ENCODE measurements at regions of chr11 and their contacts with region 1.

Region 1: GRCh38 chr11:60781286-60781980 is 3.7 kb upstream of the MS4A10 start:
- DNase-seq: no peak
- ATAC-seq: no peak
- H3K4me3 ChIP-seq: no peak overlapping the region
- H3K27ac ChIP-seq: no peak overlapping the region
- H3K4me1 ChIP-seq: peaks cover 0 to 13% (median 3%) of the 10 kb centered on the region in 12 donors
- H3K27me3 ChIP-seq: no peaks in the 10 kb centered on the region
- CTCF ChIP-seq: no peak
- POLR2A ChIP-seq: no peak

Region 2: GRCh38 chr11:60734279-60734678 is 47.2 kb before region 1 on chr11:
- intact Hi-C with region 1: no loop called
- DNase-seq: no peak
- ATAC-seq: no peak
- H3K4me3 ChIP-seq: no peak overlapping the region
- H3K27ac ChIP-seq: no peak overlapping the region
- H3K4me1 ChIP-seq: no peaks in the 10 kb centered on the region
- H3K27me3 ChIP-seq: peaks cover 0 to 13% (median 0%) of the 10 kb centered on the region in 9 donors
- CTCF ChIP-seq: no peak
- POLR2A ChIP-seq: no peak

Region 3: DNA sequence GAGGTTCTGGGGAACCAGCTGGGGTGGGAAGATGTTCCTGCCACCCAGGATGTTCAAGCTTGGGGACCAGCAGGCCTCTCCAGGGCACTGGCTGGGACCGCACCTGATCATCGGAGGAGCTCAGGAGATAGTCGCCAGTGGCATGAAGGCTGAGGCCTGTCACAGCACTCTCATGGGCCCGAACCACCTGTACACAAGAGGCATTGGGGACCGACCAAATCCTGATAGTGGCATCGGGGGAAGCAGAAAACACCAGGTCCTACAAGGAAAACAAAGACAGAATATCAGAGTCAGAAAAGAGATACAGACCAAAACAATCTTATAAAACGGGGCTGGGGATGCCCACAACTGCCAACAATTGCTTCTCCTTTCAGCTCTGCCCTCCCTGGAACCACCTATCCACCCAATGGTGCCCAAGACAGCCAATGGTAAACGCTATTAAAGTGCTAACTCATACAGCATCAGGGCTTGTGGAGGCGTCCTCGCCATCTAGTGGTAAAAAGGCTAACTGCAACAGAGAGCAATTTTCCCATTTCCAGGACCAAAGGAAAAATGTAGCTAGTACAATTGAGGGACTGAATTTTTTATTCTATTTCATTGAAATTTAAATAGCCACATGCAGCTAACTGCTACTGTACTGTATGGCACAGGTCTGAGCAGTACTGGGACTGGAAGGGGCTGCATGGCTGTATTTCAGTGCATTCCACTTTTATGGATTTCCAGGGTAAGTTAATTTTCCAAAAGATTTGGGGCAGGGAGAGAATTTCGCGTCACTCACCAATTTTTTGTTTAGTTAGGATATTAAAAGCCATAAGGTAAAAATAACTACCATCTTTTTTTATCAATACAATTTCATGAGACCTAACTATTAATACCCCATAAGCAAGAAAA is 117.9 kb after region 1 on chr11:
- intact Hi-C with region 1: loop called in 7 of 10 experiments (anchors 5 kb)
- DNase-seq: no peak
- ATAC-seq: peak in 3 of 4 donors; percentile 69 to 70 (median 70)
- H3K4me3 ChIP-seq: no peak overlapping the region
- H3K27ac ChIP-seq: no peak overlapping the region
- H3K4me1 ChIP-seq: peaks cover 0 to 15% (median 5%) of the 10 kb centered on the region in 12 donors
- H3K27me3 ChIP-seq: no peaks in the 10 kb centered on the region
- CTCF ChIP-seq: peak; percentile 90 to 98 (median 94)
- POLR2A ChIP-seq: no peak

Region 4: GRCh38 chr11:61028272-61028761 is 246.9 kb after region 1 on chr11:
- intact Hi-C with region 1: no loop called
- DNase-seq: no peak
- ATAC-seq: no peak
- H3K4me3 ChIP-seq: no peak overlapping the region
- H3K27ac ChIP-seq: peak overlapping the region in 1 of 12 donors; percentile 20
- H3K4me1 ChIP-seq: peaks cover 0 to 45% (median 8%) of the 10 kb centered on the region in 12 donors
- H3K27me3 ChIP-seq: no peaks in the 10 kb centered on the region
- CTCF ChIP-seq: no peak
- POLR2A ChIP-seq: no peak

Measured in heart left ventricle (tissue), 16 donors.